K562 (cell line): ENCODE measurements at regions of chr4 and their contacts with region 1.

Region 1: GRCh38 chr4:178752954-178753525 is 1310.8 kb upstream of the AGA start:
- DNase-seq: no peak
- ATAC-seq: no peak
- H3K4me3 ChIP-seq: no peak overlapping the region
- H3K27ac ChIP-seq: no peak overlapping the region
- H3K4me1 ChIP-seq: no peaks in the 10 kb centered on the region
- H3K27me3 ChIP-seq: no peaks in the 10 kb centered on the region
- CTCF ChIP-seq: no peak
- EP300 ChIP-seq: no peak
- POLR2A ChIP-seq: no peak
- RAD21 ChIP-seq: no peak

Region 2: DNA sequence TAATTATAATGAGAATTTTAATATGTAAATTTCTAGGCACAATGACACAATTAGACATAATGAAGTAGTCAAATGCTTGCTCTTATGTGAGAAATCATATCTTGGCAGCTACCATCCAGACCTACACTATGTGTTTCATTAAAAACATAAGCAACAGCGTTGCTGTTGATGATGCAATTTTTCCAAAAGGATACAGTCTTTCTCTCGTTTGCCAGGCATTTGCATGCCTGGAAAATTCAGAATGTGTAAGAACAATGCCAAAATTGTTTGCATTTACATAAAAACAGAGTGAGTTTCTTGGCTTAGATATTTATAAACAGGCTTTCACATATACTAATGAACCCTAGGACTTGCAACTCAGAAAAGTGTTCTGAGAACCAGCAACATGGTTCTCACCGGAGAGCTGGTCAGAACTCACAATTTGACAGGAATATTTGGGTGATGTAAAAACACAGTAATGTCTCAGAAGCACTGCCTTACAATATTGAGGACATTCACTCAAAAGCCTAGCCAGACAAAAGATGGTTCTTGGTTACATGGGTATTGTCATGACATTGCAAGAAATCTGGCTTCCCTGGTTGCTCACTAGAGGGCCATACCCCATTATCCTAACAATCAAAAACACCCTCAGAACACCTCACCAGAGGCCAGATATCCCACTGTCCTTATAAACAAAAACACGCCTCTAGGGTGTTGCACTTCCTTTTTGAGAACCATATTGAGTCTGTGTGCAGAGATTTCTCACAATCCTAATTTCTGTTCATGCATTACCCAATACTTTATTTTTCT is 281.9 kb before region 1 on chr4:
- CTCF ChIA-PET with region 1: no interaction called
- POLR2A ChIA-PET with region 1: no interaction called
- in situ Hi-C with region 1: no loop called
- intact Hi-C with region 1: no loop called
- DNase-seq: no peak
- ATAC-seq: no peak
- H3K4me3 ChIP-seq: no peak overlapping the region
- H3K27ac ChIP-seq: no peak overlapping the region
- H3K4me1 ChIP-seq: no peaks in the 10 kb centered on the region
- H3K27me3 ChIP-seq: no peaks in the 10 kb centered on the region
- CTCF ChIP-seq: no peak
- EP300 ChIP-seq: no peak
- POLR2A ChIP-seq: no peak
- RAD21 ChIP-seq: no peak

Region 3: GRCh38 chr4:178693816-178694215 is 59.2 kb before region 1 on chr4:
- CTCF ChIA-PET with region 1: no interaction called
- POLR2A ChIA-PET with region 1: no interaction called
- in situ Hi-C with region 1: loop called (anchors 5 kb)
- intact Hi-C with region 1: no loop called
- DNase-seq: no peak
- ATAC-seq: no peak
- H3K4me3 ChIP-seq: no peak overlapping the region
- H3K27ac ChIP-seq: no peak overlapping the region
- H3K4me1 ChIP-seq: no peaks in the 10 kb centered on the region
- H3K27me3 ChIP-seq: no peaks in the 10 kb centered on the region
- CTCF ChIP-seq: no peak
- EP300 ChIP-seq: no peak
- POLR2A ChIP-seq: no peak
- RAD21 ChIP-seq: no peak